Cardiac septum (tissue), 1 donor: ENCODE measurements at regions of chr3 and their contacts with region 1.

Region 1: GRCh38 chr3:158790901-158791589 is 10.8 kb upstream of the MFSD1 start:
- DNase-seq: no peak

Region 2: GRCh38 chr3:158539414-158540014 is 251.5 kb before region 1 on chr3:
- intact Hi-C with region 1: loop called (anchors 10 kb)
- DNase-seq: no peak

Region 3: DNA sequence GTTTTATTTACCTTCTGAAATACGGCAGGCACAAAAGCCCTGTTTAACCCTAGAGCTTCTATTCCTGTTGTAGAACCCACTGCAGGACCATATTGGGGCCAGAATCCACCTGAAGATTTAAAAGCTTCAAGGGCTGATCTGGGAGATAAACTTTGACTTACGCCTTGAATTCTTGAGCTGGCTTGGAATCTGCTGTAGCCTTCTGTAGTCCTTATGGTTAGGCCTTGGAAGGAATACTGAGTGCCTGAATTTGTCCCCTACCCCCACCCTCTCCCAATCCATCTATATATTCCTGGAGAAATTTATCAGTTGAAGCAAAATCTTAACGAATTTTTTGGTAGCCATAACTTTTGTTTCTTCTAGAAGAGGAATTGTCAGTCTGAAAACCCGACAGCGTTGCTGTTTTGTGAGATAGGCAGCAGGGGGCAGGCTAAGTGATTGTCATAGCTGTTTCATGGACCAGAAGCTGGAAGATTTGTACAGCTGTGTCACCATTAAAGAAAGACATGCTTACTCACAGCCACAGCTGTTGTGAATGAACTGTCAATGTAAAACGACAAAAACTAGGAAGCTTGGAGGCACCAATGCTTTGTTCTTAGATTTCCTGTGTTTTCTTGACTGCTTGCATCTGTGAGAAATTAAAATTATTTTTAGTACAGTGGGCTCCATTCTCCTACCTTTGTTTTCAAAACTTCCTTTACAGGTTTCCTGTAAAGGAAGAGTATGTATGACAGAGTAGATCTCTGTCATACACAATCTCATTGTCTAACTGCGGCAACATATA is 131.4 kb before region 1 on chr3:
- intact Hi-C with region 1: loop called (anchors 10 kb)
- DNase-seq: no peak

Region 4: DNA sequence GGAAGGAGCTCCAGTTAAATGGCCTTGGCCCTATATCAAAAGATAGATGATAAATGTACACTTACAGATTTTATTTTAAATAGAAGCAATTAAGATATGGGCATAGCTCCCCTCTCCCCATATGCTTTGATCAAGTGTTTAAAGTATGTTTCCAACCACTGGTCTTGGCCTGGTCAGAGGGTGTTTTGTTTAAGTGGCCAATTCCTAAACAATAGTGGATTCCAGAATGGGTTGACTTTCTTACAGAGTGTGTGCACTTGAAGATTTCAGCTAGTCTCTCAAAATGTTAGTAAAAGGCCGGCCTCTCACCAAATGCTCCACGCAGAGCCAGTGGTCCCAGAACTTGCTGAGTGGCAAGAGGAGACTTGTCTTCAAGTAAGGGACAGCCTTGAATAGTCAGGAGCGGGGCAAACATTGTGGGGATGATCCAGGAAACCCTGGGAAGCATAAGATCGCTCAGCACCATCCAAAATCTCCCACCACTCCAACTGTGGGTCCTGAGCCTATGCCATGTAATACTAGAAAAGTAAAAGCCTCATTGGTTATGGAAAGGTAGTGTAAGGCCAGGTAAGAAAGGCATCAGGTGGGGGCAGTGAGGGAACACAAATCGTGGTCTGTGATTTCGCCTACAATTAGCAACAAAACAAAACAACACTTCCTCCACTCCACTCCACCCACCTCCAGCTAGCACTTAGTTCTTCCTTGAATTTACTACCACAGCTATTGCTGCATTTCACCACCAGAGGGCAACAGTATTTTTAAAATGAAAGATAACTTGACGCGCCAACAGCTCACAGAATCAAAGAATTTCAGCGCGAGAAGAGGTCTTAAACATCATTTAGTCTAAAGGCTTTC is 63.6 kb before region 1 on chr3:
- intact Hi-C with region 1: loop called (anchors 1 kb)
- DNase-seq: no peak

Region 5: GRCh38 chr3:158847452-158847821 is 56.4 kb after region 1 on chr3:
- intact Hi-C with region 1: no loop called
- DNase-seq: no peak

Region 6: DNA sequence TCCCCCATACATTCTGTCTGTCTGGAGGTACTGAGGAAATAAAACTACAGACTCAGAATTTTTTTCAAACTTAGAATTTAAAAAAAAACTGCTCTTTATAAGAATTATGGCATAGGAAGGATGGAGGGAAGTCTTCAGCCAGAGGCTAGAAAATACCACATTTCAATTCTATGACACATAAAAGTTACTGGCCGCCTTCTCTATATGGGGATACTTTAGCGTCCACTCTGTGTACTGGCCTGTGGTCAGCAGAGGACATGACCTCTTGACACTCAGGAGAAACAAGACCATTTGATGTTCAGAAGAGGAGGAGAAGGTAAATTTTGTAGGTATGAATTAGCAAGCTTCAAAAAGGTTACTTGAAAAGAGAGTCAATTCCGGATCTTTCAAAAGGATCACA is 428.2 kb after region 1 on chr3:
- intact Hi-C with region 1: no loop called
- DNase-seq: no peak